Calu3 (cell line): ENCODE measurements at regions of chr2 and their contacts with region 1.

Region 1: GRCh38 chr2:237714690-237715458 is 83.7 kb upstream of the RBM44 start:
- DNase-seq: peak; percentile 43
- H3K4me3 Mint-ChIP-seq: peak overlapping the region; percentile 71
- H3K27ac Mint-ChIP-seq: peak overlapping the region; percentile 28
- H3K4me1 Mint-ChIP-seq: peaks cover 75% of the 10 kb centered on the region
- H3K27me3 Mint-ChIP-seq: no peaks in the 10 kb centered on the region
- CTCF ChIP-seq: no peak

Region 2: DNA sequence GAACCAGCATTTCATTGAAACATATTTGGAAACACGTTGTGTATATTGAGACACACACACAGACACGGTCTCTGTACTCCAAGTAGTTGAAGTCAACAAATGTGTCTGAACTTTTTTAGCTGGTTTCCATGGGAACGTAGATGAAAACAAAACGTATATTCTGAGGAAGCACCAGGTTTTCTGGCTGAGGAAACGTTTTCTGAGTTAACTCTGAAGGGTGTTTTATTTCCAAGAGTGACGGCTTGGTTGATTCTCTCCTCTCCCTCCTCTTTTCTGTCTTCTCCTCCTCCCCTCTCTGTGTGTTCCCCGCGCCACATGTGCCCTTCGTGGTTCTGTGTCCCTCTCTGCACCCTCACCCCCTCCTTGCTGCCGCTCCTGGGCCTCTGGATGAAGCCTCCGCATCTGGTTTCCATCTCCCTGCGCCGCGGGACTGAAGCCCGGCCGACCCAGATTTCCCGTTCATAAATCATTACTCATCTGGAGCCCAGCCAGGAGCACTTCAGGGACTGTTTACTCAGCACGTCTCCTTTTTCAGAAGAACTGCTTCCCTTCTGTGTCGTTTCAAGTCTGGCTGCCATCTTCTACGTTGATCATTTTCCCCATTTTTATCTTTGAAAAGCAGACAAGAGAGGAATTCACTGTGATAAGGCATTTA is 423.6 kb before region 1 on chr2:
- CTCF ChIA-PET with region 1: no interaction called
- intact Hi-C with region 1: no loop called
- DNase-seq: peak; percentile 88
- H3K4me3 Mint-ChIP-seq: peak overlapping the region; percentile 36
- H3K27ac Mint-ChIP-seq: peak overlapping the region; percentile 38
- H3K4me1 Mint-ChIP-seq: peaks cover 31% of the 10 kb centered on the region
- H3K27me3 Mint-ChIP-seq: no peaks in the 10 kb centered on the region
- CTCF ChIP-seq: no peak

Region 3: GRCh38 chr2:237465515-237466218 is 249.2 kb before region 1 on chr2:
- CTCF ChIA-PET with region 1: no interaction called
- intact Hi-C with region 1: no loop called
- DNase-seq: no peak
- H3K4me3 Mint-ChIP-seq: no peak overlapping the region
- H3K27ac Mint-ChIP-seq: peak overlapping the region; percentile 11
- H3K4me1 Mint-ChIP-seq: peaks cover 8% of the 10 kb centered on the region
- H3K27me3 Mint-ChIP-seq: peaks cover 13% of the 10 kb centered on the region
- CTCF ChIP-seq: no peak

Region 4: DNA sequence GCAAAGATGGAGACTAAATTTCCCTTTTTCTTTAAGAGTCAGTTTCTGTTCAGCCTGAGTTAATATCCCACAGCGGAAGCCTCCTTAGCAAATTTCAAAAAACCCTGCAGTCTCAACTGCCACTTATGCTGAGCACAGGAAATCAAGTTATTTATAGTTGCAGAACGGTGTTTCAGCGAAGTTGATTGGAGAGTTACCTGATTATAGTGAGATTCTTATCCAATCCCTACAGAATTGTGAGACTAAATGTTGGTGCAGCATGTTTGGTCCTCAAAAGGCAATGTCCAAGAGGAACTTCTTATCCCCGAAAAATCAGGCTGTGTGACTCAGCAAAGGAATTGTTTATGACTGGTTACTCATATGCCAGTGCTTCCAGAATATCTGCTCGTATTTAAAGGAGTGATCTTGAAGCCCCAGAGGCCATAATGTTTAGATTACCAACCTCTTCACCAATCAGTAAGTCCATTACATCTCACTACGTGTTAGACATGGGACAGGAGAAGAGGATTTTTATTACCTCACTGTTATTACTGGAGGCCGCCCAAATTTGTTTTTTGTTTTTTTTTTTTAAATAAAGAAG is 19.6 kb before region 1 on chr2:
- CTCF ChIA-PET with region 1: interaction called, 5 read pairs
- intact Hi-C with region 1: loop called (anchors 2 kb)
- DNase-seq: no peak
- H3K4me3 Mint-ChIP-seq: peak overlapping the region; percentile 84
- H3K27ac Mint-ChIP-seq: peak overlapping the region; percentile 91
- H3K4me1 Mint-ChIP-seq: peaks cover 59% of the 10 kb centered on the region
- H3K27me3 Mint-ChIP-seq: no peaks in the 10 kb centered on the region
- CTCF ChIP-seq: no peak

Region 5: DNA sequence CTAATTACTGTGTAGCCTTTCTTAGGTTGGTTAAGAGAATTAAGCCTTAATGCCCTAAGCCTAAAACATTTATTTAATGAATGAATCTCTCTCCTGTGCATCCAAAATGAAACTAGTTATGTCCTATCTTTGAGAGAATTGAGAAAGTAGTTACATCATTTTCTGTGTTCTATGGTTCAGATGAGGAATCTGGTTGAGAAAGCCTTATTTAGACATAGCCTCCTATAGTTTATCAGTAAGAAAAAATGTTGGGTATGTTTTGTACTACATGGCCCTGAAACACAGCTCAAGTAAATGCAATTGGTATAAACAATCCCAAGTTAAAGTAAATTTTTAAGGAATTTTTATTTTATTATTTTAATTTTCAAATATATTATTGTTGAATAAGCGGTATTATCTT is 118.7 kb after region 1 on chr2:
- CTCF ChIA-PET with region 1: no interaction called
- intact Hi-C with region 1: no loop called
- DNase-seq: no peak
- H3K4me3 Mint-ChIP-seq: no peak overlapping the region
- H3K27ac Mint-ChIP-seq: no peak overlapping the region
- H3K4me1 Mint-ChIP-seq: peaks cover 7% of the 10 kb centered on the region
- H3K27me3 Mint-ChIP-seq: no peaks in the 10 kb centered on the region
- CTCF ChIP-seq: no peak

Region 6: GRCh38 chr2:237886685-237887481 is 172.0 kb after region 1 on chr2:
- CTCF ChIA-PET with region 1: no interaction called
- intact Hi-C with region 1: no loop called
- DNase-seq: no peak
- H3K4me3 Mint-ChIP-seq: no peak overlapping the region
- H3K27ac Mint-ChIP-seq: no peak overlapping the region
- H3K4me1 Mint-ChIP-seq: no peaks in the 10 kb centered on the region
- H3K27me3 Mint-ChIP-seq: no peaks in the 10 kb centered on the region
- CTCF ChIP-seq: no peak